ENCODE measurements at regions of chr1 and their contacts with region 1.

Region 1: GRCh38 chr1:31789259-31790065 is 25.3 kb upstream of the ADGRB2 start:
- DNase-seq: peak; percentile 96
- H3K4me3 Mint-ChIP-seq: peak overlapping the region; percentile 84
- H3K27ac Mint-ChIP-seq: no peak overlapping the region
- H3K4me1 Mint-ChIP-seq: peaks cover 16% of the 10 kb centered on the region
- H3K27me3 Mint-ChIP-seq: peaks cover 5% of the 10 kb centered on the region

Region 2: GRCh38 chr1:31564134-31564989 is 225.1 kb before region 1 on chr1:
- CTCF ChIA-PET with region 1: interaction called, 24 read pairs
- POLR2A ChIA-PET with region 1: no interaction called
- DNase-seq: peak; percentile 58
- H3K4me3 Mint-ChIP-seq: no peak overlapping the region
- H3K27ac Mint-ChIP-seq: no peak overlapping the region
- H3K4me1 Mint-ChIP-seq: no peaks in the 10 kb centered on the region
- H3K27me3 Mint-ChIP-seq: peaks cover 16% of the 10 kb centered on the region

Region 3: DNA sequence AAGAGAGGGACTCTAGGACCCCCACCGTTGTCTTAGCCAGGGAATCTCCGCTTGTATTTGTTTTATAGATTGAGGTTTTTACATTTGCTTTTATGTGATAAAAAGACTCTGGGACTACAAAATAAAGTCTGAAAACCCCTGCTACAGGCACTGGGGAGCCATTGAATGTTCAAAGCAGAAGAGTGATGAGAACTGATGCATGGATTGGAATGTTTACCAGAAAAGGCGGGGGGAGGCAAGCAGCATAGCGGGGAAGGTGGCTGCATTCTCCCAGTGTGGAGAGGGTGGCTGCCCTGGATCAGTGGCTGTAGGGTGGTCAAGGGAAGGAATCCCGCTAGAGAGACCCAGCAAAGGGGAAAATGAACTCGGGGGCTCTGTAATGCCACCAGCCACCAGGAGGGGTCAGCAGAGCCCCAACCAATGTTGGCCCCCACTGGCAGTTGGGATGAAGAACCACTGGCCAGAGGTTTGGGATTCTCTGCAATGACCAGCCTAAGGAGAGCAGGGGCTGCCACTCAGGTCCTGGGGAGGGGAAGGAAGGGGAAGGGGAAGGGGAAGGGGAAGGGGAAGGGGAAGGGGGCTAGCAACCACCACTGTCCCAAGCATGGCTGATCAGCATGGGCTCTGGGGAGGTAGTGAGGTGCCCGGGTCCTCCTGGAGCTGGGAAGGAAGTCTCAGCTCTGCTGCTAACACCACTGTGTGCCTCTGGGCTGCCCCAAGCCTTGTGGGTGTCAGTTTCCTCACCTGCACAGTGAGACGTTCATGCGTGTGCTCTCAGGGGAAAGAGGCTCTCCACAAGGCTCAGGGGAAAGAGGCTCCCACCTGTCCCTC is 125.6 kb before region 1 on chr1:
- CTCF ChIA-PET with region 1: interaction called, 45 read pairs
- POLR2A ChIA-PET with region 1: no interaction called
- DNase-seq: peak; percentile 63
- H3K4me3 Mint-ChIP-seq: no peak overlapping the region
- H3K27ac Mint-ChIP-seq: no peak overlapping the region
- H3K4me1 Mint-ChIP-seq: no peaks in the 10 kb centered on the region
- H3K27me3 Mint-ChIP-seq: peaks cover 7% of the 10 kb centered on the region

Region 4: GRCh38 chr1:31705080-31705866 is 84.2 kb before region 1 on chr1:
- CTCF ChIA-PET with region 1: interaction called, 10 read pairs
- POLR2A ChIA-PET with region 1: no interaction called
- DNase-seq: peak; percentile 82
- H3K4me3 Mint-ChIP-seq: no peak overlapping the region
- H3K27ac Mint-ChIP-seq: no peak overlapping the region
- H3K4me1 Mint-ChIP-seq: peaks cover 42% of the 10 kb centered on the region
- H3K27me3 Mint-ChIP-seq: peaks cover 46% of the 10 kb centered on the region

Region 5: GRCh38 chr1:31745096-31745945 is 44.1 kb before region 1 on chr1:
- CTCF ChIA-PET with region 1: interaction called, 15 read pairs
- POLR2A ChIA-PET with region 1: interaction called, 3 read pairs
- DNase-seq: peak; percentile 73
- H3K4me3 Mint-ChIP-seq: no peak overlapping the region
- H3K27ac Mint-ChIP-seq: no peak overlapping the region
- H3K4me1 Mint-ChIP-seq: peaks cover 10% of the 10 kb centered on the region
- H3K27me3 Mint-ChIP-seq: peaks cover 10% of the 10 kb centered on the region

Region 6: GRCh38 chr1:32005522-32005921 is 216.1 kb after region 1 on chr1:
- CTCF ChIA-PET with region 1: interaction called, 10 read pairs
- POLR2A ChIA-PET with region 1: no interaction called
- DNase-seq: no peak
- H3K4me3 Mint-ChIP-seq: no peak overlapping the region
- H3K27ac Mint-ChIP-seq: no peak overlapping the region
- H3K4me1 Mint-ChIP-seq: peaks cover 9% of the 10 kb centered on the region
- H3K27me3 Mint-ChIP-seq: peaks cover 1% of the 10 kb centered on the region

Region 7: DNA sequence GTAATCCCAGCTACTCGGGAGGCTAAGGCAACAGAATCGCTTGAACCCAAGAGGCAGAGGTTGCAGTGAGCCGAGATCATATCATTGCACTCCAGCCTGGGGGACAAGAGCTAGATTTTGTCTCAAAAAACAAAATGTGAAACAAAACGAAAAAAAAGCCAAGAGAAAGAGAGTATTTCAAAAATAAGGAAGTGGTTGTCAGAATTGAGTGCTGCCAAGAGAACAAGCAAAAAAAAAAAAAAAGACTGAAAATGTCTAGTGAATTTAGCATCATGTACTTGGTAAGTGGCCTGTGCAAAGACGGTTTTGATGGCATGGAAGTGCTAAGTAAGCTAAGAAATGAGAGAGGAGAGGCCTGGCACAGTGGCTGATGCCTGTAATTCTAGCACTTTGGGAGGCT is 332.7 kb after region 1 on chr1:
- CTCF ChIA-PET with region 1: no interaction called
- POLR2A ChIA-PET with region 1: no interaction called
- DNase-seq: no peak
- H3K4me3 Mint-ChIP-seq: no peak overlapping the region
- H3K27ac Mint-ChIP-seq: peak overlapping the region; percentile 10
- H3K4me1 Mint-ChIP-seq: peaks cover 23% of the 10 kb centered on the region
- H3K27me3 Mint-ChIP-seq: no peaks in the 10 kb centered on the region

Measured in activated CD4-positive, alpha-beta memory T cell treated with anti-CD3 and anti-CD28 coated beads, Interleukin-2, amount 10 ng/mL, durations not matched to agents 7 days and 5 days (primary cell).